Activated naive CD4-positive, alpha-beta T cell treated with anti-CD3 and anti-CD28 coated beads for 36 hours (primary cell): ENCODE measurements at regions of chr11 and their contacts with region 1.

Region 1: DNA sequence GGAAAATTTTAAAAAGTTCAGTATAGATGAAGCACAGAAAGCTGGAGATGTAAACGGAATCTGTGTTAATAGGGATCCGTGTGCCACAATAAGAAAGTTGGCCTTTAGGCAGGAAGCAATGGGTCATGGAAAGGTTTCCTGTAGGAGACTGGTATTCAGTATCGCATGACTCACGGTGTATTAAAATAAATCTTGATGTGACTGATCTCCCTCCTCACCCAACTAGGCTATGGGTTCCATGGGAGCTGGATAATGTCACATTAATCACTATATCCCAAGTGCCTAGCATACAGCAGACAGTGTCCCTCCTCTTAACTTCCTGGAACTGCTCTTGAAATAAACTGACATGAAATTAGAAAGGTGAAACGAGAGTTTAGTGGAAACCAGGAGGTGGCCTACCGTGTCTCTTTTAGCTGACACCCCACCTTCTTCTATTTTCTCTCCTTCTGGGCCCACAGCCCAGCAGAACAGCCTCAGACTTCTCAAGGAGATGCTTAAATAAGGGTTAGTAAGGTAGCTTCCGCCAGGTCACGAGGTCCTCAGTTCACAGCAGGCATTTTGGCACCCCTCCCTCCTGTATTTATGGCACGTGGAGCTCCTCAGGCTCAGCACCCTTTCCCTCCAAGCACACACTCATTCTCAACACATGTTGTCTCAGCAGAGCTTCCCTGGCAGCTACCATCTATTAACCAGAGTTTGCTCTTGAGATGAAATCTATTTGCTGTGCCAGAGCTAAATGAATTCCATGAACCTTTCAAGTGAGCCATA is 118.8 kb downstream of the NXPE2 start:
- DNase-seq: no peak
- H3K4me3 Mint-ChIP-seq: no peak overlapping the region
- H3K27ac Mint-ChIP-seq: no peak overlapping the region
- H3K4me1 Mint-ChIP-seq: no peaks in the 10 kb centered on the region
- H3K27me3 Mint-ChIP-seq: peaks cover 27% of the 10 kb centered on the region

Region 2: DNA sequence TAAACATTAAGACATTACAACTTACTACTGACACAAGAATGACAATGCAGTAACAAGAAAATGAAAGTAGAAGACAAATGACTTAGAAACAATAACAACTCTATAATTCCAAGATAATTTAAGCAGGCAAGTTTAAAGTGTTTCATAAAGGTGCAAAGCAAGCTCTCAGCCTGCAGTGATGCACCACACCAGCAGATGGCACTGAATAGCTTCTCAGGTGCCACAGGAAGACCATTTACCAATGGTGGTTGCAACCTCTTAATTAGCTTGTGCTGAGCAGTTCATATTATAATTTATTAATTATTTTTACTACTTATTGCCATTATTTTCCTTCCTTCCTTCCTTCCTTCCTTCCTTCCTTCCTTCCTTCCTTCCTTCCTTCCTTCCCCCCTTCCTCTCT is 58.2 kb before region 1 on chr11:
- CTCF ChIA-PET with region 1: interaction called, 11 read pairs
- intact Hi-C with region 1: no loop called
- DNase-seq: peak; percentile 60
- H3K4me3 Mint-ChIP-seq: no peak overlapping the region
- H3K27ac Mint-ChIP-seq: no peak overlapping the region
- H3K4me1 Mint-ChIP-seq: no peaks in the 10 kb centered on the region
- H3K27me3 Mint-ChIP-seq: peaks cover 3% of the 10 kb centered on the region

Region 3: GRCh38 chr11:114883472-114883871 is 86.3 kb after region 1 on chr11:
- CTCF ChIA-PET with region 1: no interaction called
- intact Hi-C with region 1: no loop called
- DNase-seq: no peak
- H3K4me3 Mint-ChIP-seq: no peak overlapping the region
- H3K27ac Mint-ChIP-seq: no peak overlapping the region
- H3K4me1 Mint-ChIP-seq: no peaks in the 10 kb centered on the region
- H3K27me3 Mint-ChIP-seq: peaks cover 4% of the 10 kb centered on the region